ENCODE measurements at regions of chr10 and their contacts with region 1.

Region 1: DNA sequence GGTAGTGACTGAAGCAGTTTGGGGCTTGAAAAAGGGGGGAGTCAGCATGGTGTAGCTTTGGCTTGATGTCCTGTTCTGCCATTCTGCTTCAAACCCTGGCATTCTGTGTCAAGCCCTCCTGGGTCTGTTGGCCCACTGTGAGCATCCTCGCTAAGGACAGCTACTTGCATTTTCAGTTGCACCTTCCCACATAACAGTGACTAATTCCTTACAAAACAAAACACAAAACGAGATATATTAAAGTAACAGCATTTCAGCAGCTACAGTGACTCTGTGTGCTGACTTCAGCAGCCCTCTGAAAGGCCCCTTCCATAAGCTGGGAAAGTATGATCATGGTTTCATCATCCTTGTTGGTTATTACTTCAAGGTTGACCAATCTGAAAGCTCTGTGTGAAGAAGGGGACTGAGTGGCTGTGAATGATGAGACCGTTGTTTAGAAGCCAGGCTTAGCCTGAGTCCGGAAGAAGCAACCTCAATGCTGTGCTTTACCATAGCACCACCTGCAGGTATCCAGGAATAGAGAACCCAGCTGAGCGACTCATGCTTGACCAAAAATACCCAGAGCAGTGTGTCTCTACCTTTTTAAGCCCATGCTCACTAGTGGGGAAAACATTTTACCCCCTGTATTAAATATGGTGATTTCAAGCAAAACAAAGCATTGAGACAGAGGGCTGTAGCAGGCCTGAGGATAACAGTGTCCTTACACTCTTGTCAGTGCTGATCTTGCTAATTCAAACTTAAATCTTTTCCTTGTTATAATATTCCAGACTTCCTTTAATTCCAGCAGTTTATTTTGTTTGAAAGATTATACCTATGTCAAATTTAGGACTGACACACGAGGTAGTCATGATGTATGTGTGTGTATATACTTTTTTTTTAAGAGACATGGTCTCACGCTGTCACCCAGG is 42.6 kb upstream of the CC2D2B start:
- DNase-seq: no peak
- H3K4me3 ChIP-seq: no peak overlapping the region
- H3K27ac ChIP-seq: no peak overlapping the region
- H3K4me1 ChIP-seq: no peaks in the 10 kb centered on the region
- H3K27me3 ChIP-seq: no peaks in the 10 kb centered on the region
- CTCF ChIP-seq: peak in 3 of 4 experiments; percentile 34 to 41 (median 38)
- POLR2A ChIP-seq: no peak

Region 2: GRCh38 chr10:95613330-95613729 is 251.8 kb before region 1 on chr10:
- intact Hi-C with region 1: no loop called
- DNase-seq: no peak
- H3K4me3 ChIP-seq: no peak overlapping the region
- H3K27ac ChIP-seq: no peak overlapping the region
- H3K4me1 ChIP-seq: no peaks in the 10 kb centered on the region
- H3K27me3 ChIP-seq: no peaks in the 10 kb centered on the region
- CTCF ChIP-seq: no peak
- POLR2A ChIP-seq: no peak

Region 3: GRCh38 chr10:95693668-95694534 is 171.3 kb before region 1 on chr10 and contains the start of gene TCTN3:
- intact Hi-C with region 1: loop called (anchors 1 kb)
- DNase-seq: peak; percentile 98
- H3K4me3 ChIP-seq: peak within 1 kb of the TSS; percentile 71 to 89
- H3K27ac ChIP-seq: peak within 1 kb of the TSS; percentile 63 to 80
- H3K4me1 ChIP-seq: peaks cover 5% of the 10 kb centered on the region
- H3K27me3 ChIP-seq: no peaks in the 10 kb centered on the region
- CTCF ChIP-seq: peak; percentile 99 to 100 (median 100)
- POLR2A ChIP-seq: peak; percentile 67
- total RNA-seq, gene TCTN3: 27.7 to 44.9 TPM

Region 4: DNA sequence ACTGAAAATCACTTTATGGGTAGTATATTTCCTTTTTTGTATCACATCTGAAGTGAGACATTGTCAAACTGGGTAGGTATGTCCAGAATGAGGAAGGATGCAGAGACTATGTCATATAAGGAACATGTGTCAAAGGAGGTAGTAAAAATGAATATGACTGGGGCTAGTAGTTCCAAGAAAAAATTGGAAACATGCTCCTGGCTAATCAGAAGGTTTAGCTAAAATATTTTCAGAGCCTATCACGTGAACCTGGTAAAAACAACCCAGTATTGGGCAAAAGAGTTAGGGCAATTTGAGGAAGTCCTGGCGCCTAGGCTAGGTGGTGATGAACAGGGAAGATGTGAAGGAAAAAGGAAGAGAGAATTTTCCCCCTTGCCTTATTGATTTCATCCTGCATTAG is 82.8 kb before region 1 on chr10:
- intact Hi-C with region 1: no loop called
- DNase-seq: no peak
- H3K4me3 ChIP-seq: no peak overlapping the region
- H3K27ac ChIP-seq: no peak overlapping the region
- H3K4me1 ChIP-seq: no peaks in the 10 kb centered on the region
- H3K27me3 ChIP-seq: no peaks in the 10 kb centered on the region
- CTCF ChIP-seq: no peak
- POLR2A ChIP-seq: no peak

Region 5: GRCh38 chr10:95941115-95941514 is 76.0 kb after region 1 on chr10:
- intact Hi-C with region 1: no loop called
- DNase-seq: no peak
- H3K4me3 ChIP-seq: no peak overlapping the region
- H3K27ac ChIP-seq: no peak overlapping the region
- H3K4me1 ChIP-seq: no peaks in the 10 kb centered on the region
- H3K27me3 ChIP-seq: no peaks in the 10 kb centered on the region
- CTCF ChIP-seq: no peak
- POLR2A ChIP-seq: no peak

Region 6: GRCh38 chr10:96056787-96057186 is 191.6 kb after region 1 on chr10:
- intact Hi-C with region 1: no loop called
- DNase-seq: no peak
- H3K4me3 ChIP-seq: no peak overlapping the region
- H3K27ac ChIP-seq: no peak overlapping the region
- H3K4me1 ChIP-seq: no peaks in the 10 kb centered on the region
- H3K27me3 ChIP-seq: no peaks in the 10 kb centered on the region
- CTCF ChIP-seq: no peak
- POLR2A ChIP-seq: no peak

Measured in prostate gland (tissue), 2 donors.